ENCODE measurements at regions of chr4 and their contacts with region 1.

Region 1: DNA sequence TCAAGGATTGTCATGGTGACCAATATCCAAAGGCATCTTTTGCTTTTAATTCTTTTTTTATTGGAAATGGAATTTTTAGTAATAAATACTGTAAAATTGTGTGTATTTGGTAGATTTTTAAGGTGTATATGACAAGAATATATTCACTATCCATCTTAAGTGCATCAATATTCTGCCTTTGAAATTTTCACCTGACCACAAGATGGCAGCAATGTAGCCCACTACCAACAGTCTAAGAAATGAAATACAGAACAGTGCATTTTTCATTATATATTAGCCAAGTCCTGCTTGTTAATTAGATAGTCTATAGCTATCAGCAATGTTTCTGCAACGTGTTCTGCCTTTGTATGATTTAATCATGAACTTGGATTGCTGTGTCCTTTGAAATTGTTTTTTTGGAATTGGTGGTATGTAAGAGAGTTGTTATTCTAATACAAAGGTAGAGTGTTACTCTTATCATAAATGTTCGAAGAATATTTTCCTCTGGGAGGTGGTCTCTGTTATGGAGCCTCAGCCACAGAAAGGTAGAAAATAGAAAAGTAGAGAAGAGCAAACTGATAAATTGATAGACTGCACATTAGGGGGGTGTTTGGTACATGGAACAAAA is 38.2 kb downstream of the HPGDS start:
- DNase-seq: peak in 2 of 9 experiments; percentile 19 to 36
- ATAC-seq: no peak
- H3K4me3 ChIP-seq: no peak overlapping the region
- H3K4me3 Mint-ChIP-seq: no peak overlapping the region
- H3K27ac ChIP-seq: no peak overlapping the region
- H3K27ac Mint-ChIP-seq: no peak overlapping the region
- H3K4me1 ChIP-seq: no peaks in the 10 kb centered on the region
- H3K4me1 Mint-ChIP-seq: no peaks in the 10 kb centered on the region
- H3K27me3 ChIP-seq: no peaks in the 10 kb centered on the region
- H3K27me3 Mint-ChIP-seq: no peaks in the 10 kb centered on the region
- CTCF ChIP-seq: peak; percentile 45

Region 2: GRCh38 chr4:94390804-94391410 is 86.4 kb after region 1 on chr4:
- CTCF ChIA-PET with region 1: no interaction called
- POLR2A ChIA-PET with region 1: no interaction called
- intact Hi-C with region 1: loop called (anchors 2 to 5 kb)
- DNase-seq: peak in 2 of 9 experiments; percentile 6 to 23
- ATAC-seq: no peak
- H3K4me3 ChIP-seq: no peak overlapping the region
- H3K4me3 Mint-ChIP-seq: no peak overlapping the region
- H3K27ac ChIP-seq: no peak overlapping the region
- H3K27ac Mint-ChIP-seq: no peak overlapping the region
- H3K4me1 ChIP-seq: no peaks in the 10 kb centered on the region
- H3K4me1 Mint-ChIP-seq: no peaks in the 10 kb centered on the region
- H3K27me3 ChIP-seq: no peaks in the 10 kb centered on the region
- H3K27me3 Mint-ChIP-seq: no peaks in the 10 kb centered on the region
- CTCF ChIP-seq: peak; percentile 60

Region 3: DNA sequence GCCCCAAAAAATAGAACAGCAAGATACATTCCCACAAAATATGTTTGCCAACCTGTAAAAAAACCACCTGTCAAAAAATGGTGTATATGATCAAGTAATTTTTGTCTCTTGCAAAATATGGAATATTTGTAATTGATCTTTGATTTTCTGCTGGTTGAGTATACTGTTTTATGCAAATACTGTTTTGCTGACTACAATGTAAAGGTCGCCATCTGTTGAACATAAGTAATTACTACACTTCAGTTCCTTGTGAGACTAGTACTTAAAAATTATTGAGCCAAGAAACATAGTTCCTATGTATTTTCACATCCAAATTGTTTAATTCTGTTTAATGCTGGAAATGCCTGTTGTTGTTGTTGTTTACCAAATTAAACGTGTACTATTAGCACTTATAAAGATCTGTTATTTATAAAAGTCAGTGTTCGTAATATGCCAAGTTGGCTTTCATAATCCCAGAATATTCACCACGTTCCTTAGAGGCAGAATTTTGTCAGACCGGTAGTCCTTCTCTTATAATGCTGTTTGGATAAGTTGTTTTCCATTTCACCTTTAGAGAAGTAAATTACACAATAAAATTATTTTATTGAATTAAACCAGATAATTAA is 291.5 kb after region 1 on chr4:
- CTCF ChIA-PET with region 1: no interaction called
- POLR2A ChIA-PET with region 1: no interaction called
- intact Hi-C with region 1: loop called (anchors 1 to 2 kb)
- DNase-seq: peak in 2 of 9 experiments; percentile 43 to 61
- ATAC-seq: peak; percentile 49
- H3K4me3 ChIP-seq: no peak overlapping the region
- H3K4me3 Mint-ChIP-seq: no peak overlapping the region
- H3K27ac ChIP-seq: no peak overlapping the region
- H3K27ac Mint-ChIP-seq: no peak overlapping the region
- H3K4me1 ChIP-seq: no peaks in the 10 kb centered on the region
- H3K4me1 Mint-ChIP-seq: no peaks in the 10 kb centered on the region
- H3K27me3 ChIP-seq: no peaks in the 10 kb centered on the region
- H3K27me3 Mint-ChIP-seq: no peaks in the 10 kb centered on the region
- CTCF ChIP-seq: peak; percentile 89

Measured in CD8-positive, alpha-beta T cell (primary cell).